ENCODE measurements at regions of chr17 and their contacts with region 1.

Region 1: GRCh38 chr17:71726341-71726740 is 394.5 kb upstream of the SOX9 start:
- DNase-seq: no peak
- H3K4me3 ChIP-seq: no peak overlapping the region
- H3K27ac ChIP-seq: no peak overlapping the region
- H3K4me1 ChIP-seq: no peaks in the 10 kb centered on the region
- H3K27me3 ChIP-seq: no peaks in the 10 kb centered on the region
- CTCF ChIP-seq: no peak
- EP300 ChIP-seq: no peak
- POLR2A ChIP-seq: no peak

Region 2: GRCh38 chr17:72143245-72143644 is 416.9 kb after region 1 on chr17:
- intact Hi-C with region 1: loop called in 1 of 4 experiments (anchors 5 kb)
- DNase-seq: no peak
- H3K4me3 ChIP-seq: no peak overlapping the region
- H3K27ac ChIP-seq: no peak overlapping the region
- H3K4me1 ChIP-seq: no peaks in the 10 kb centered on the region
- H3K27me3 ChIP-seq: no peaks in the 10 kb centered on the region
- CTCF ChIP-seq: no peak
- EP300 ChIP-seq: no peak
- POLR2A ChIP-seq: no peak

Region 3: GRCh38 chr17:72306037-72306436 is 579.7 kb after region 1 on chr17:
- intact Hi-C with region 1: loop called in 1 of 4 experiments (anchors 5 kb)
- DNase-seq: no peak
- H3K4me3 ChIP-seq: no peak overlapping the region
- H3K27ac ChIP-seq: no peak overlapping the region
- H3K4me1 ChIP-seq: no peaks in the 10 kb centered on the region
- H3K27me3 ChIP-seq: no peaks in the 10 kb centered on the region
- CTCF ChIP-seq: no peak
- EP300 ChIP-seq: no peak
- POLR2A ChIP-seq: no peak